Head of caudate nucleus (tissue), 42 donors: ENCODE measurements at regions of chr18 and their contacts with region 1.

Region 1: GRCh38 chr18:45690975-45691815 is 32.8 kb upstream of the SLC14A1 start:
- DNase-seq: peak; percentile 60 to 92 (median 83)

Region 2: DNA sequence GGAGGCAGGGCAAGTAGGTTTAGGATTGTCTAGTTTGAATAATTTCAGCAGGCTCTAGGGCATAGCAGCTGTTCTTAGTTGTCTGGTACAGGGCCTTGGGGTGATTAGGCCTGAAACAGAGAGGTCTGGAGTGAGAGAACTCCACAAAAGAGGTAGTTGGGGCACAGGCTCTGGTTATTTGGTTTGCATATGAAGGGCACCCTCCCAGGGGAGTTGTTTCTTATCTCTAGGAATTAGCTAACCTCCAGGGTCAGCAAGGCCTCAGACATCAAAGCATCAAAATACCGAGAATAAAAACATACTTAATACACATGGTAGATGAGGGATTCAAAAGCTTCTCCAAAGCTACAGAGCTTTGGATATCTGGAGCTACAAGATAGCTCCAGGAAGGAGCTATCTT is 114.3 kb before region 1 on chr18:
- intact Hi-C with region 1: no loop called
- DNase-seq: no peak

Region 3: DNA sequence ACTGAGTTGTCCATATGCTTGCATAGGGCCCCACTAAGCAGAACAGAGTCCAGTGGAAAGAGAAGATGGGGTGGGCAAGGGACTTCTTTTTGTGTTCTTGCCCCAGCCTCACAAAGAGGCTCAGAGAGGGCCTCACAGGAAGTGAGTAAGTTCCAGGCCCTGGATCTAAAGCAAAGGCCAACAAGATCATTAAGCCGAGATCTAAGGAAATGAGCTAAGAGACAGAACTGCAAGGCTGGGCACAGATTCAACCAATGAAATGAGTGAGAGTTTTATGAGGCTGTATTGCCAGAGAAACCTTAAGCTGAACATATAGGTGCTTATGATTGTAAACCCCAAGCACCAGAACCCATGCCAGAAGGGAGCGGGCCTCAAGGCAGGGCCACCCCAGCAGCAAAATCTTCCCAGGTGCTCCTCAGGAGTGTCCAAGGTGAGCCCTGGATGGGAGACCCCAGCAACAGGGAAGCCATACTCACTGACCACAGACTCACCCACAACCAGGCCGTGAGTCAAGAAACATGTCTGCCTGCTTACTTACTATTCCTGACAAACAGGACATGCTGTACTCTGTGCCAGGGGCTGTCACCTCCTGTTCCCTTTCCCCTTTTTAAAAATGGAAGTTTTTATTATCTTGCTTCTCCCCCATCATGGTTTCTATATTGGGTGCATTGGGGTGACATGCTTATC is 72.9 kb after region 1 on chr18:
- intact Hi-C with region 1: no loop called
- DNase-seq: no peak

Region 4: GRCh38 chr18:45879681-45880655 is 188.8 kb after region 1 on chr18:
- intact Hi-C with region 1: loop called (anchors 10 kb)
- DNase-seq: peak; percentile 12 to 85 (median 67)

Region 5: DNA sequence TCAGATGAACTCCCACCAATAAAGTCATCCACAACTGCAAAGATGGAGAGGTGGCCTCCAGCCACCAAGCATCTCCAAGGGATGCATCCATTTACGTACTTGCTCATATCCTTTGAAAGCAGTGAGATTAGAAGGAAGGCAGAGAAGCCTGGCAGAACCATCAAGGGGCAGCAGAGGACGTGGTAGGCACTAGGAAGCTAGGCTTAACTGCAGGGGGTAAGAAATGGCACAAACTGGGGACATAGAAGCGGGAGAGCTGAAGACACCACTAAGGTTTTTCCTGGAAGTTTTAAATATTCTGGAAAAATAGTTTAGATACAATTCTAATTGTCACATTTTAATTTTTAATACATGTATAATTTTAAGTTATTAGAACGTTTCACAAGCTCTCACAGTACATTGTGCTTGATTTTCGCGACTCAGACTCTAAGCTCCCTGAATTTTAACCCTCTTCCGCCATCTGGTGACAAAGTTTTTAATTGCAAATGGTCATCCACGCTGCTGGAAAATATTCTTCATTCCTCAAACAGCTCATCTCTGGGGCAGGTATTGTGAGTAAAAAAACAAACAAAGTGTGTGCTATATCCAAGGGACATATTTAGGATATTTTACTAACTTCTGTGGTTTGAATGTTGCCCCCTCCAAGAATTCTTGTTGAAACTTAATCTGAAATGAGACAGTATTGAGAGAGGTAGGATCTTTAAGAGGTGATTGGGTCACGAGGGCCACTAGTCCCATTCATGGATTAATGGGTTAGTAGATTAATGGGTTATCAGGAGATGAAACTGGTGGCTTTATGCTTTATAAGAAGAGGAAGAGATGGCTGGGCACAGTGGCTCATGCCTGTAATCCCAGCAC is 382.5 kb after region 1 on chr18:
- intact Hi-C with region 1: no loop called
- DNase-seq: peak in 21 of 42 donors; percentile 24 to 81 (median 55)